ENCODE measurements at regions of chr5 and their contacts with region 1.

Region 1: GRCh38 chr5:142699184-142699720 is 13.4 kb upstream of the FGF1 start:
- DNase-seq: peak; percentile 86
- H3K4me3 Mint-ChIP-seq: no peak overlapping the region
- H3K27ac Mint-ChIP-seq: no peak overlapping the region
- H3K4me1 Mint-ChIP-seq: no peaks in the 10 kb centered on the region
- H3K27me3 Mint-ChIP-seq: peaks cover 22% of the 10 kb centered on the region

Region 2: GRCh38 chr5:142587354-142587965 is 111.8 kb before region 1 on chr5:
- CTCF ChIA-PET with region 1: interaction called, 25 read pairs
- DNase-seq: peak; percentile 35
- H3K4me3 Mint-ChIP-seq: no peak overlapping the region
- H3K27ac Mint-ChIP-seq: no peak overlapping the region
- H3K4me1 Mint-ChIP-seq: peaks cover 3% of the 10 kb centered on the region
- H3K27me3 Mint-ChIP-seq: peaks cover 24% of the 10 kb centered on the region

Region 3: DNA sequence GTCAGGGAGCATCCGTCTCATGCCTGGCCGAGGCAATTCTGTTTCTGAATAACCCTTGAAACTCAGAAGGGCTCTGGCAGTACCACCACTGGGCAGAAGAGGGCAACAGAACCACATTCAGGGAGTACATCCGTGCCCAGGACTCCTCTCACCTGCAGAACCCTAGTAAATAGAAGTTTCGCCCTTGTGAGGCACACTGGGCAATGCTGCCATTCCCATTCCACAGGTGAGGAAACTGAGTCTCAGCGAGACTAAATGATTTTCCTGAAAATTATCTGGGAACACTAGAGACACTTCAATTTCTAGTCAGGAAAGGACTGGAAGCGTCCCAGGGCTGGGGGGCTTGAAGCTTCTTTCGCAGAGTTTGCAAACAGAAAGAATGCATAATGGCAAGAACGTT is 88.1 kb before region 1 on chr5:
- CTCF ChIA-PET with region 1: interaction called, 43 read pairs
- DNase-seq: peak; percentile 80
- H3K4me3 Mint-ChIP-seq: no peak overlapping the region
- H3K27ac Mint-ChIP-seq: no peak overlapping the region
- H3K4me1 Mint-ChIP-seq: no peaks in the 10 kb centered on the region
- H3K27me3 Mint-ChIP-seq: peaks cover 16% of the 10 kb centered on the region

Region 4: DNA sequence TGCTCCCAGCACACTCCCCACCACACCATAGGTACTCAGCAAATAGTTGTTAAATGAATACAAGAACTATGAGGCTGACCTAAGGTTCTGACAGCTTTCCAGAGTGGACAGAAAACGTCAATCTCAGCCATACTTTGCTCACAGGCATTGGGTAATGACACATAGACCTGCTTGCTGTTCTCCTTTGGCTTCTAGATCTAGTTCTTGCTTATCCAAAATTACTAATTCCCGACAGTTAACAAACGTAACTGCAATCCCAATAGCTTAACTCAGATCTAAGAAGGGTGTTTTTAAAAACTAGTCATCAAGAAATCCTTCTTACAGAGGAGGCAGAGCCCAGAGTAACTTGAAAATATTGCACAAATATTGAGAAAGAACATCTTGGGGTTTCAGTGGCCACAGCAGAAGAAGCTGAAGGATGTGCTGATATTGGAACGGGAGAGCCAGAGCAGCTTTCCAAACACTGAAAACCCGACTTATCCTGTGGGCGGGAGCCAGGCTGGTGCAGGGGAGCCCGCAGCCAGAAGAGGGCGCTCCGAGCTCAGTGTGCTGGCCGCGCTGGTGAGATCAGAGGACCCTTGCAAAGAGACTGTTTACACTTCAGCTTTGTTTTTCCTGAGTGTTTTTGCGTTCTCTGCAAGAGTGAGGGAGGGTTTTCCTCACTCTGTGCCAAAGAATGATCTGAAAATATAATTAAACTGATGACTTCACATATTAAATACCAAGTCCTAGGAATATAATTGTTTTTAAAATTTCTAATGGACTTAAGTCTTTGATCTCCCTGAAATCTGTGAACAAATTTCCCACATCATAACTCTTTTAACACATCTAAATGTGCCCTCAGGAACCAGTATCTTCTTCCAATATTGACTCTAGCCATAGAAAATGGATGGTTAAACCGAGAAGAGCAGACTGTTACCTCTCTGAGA is 43.6 kb before region 1 on chr5:
- CTCF ChIA-PET with region 1: interaction called, 61 read pairs
- DNase-seq: peak; percentile 76
- H3K4me3 Mint-ChIP-seq: no peak overlapping the region
- H3K27ac Mint-ChIP-seq: no peak overlapping the region
- H3K4me1 Mint-ChIP-seq: no peaks in the 10 kb centered on the region
- H3K27me3 Mint-ChIP-seq: peaks cover 34% of the 10 kb centered on the region

Region 5: DNA sequence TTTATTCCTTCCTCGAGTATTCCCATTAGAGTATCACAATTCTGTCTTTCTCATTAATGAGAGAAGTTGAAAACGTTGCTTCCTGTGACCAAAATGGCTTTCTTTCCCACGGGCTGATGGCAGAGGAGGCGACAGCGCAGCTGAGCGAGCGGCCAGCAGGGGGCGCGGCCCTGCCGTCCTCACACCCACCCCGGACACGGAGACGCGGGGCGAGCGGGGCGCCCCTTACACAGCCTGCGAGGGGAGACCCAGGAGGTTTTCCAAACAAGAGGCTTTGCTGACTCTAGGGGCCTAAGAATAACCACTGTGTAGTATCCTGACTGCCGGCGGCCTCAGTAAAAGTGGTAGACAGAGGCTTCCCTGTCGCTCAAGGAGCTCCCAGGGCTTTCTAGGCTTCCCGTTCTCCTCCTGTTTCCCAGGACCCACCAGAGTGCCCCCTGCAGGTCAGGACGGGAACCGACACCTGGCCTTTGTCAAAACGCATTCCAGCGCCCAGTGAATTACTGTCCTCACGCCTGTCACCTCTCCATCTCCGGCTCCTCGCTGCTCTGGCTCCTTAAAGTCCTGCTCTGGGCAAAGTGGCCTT is 14.0 kb after region 1 on chr5:
- CTCF ChIA-PET with region 1: interaction called, 12 read pairs
- DNase-seq: peak; percentile 87
- H3K4me3 Mint-ChIP-seq: peak overlapping the region; percentile 68
- H3K27ac Mint-ChIP-seq: no peak overlapping the region
- H3K4me1 Mint-ChIP-seq: peaks cover 6% of the 10 kb centered on the region
- H3K27me3 Mint-ChIP-seq: peaks cover 32% of the 10 kb centered on the region

Region 6: DNA sequence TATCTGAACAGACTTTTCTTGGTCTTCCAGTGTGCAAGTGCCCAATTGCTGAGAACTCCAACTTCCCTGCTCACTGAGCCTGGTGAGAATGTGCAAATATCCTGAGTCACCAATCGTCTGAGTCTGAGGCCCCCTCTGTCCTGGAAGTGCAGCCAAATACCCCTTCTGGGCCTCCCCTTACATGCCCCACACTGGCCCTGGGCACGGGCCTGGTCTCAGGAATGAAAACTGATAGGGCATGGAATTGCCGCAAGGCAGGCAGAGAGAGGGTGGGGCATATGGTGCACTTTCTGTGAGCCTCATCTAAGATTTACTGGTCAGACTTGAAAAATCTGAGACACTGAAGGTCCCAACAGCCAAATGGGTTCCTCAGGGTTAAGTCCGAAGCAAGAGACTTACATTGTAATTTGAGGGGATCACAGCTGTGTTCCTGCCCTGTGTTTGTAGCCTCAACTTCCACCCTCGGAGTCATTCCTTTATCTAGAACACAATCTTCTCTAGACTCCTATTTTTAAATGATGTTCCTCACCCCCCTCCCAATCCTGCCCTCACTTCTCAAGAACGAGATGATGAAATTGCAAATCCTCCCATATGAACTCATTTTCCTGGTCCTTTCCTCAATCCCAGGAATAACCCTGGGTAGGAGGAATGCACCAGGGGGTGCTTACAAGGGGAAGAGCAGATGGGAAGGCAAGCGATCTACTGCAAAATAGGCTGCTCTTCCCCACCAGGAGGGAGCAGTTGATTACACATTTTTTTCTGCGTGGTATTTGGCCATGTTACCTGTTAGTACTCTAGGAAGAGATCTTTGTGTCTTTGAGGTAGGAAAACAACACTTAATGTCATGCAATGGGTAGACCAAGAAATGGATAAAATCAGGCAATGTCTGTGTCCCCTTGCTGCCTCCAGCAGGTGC is 36.3 kb after region 1 on chr5:
- CTCF ChIA-PET with region 1: no interaction called
- DNase-seq: no peak
- H3K4me3 Mint-ChIP-seq: no peak overlapping the region
- H3K27ac Mint-ChIP-seq: no peak overlapping the region
- H3K4me1 Mint-ChIP-seq: peaks cover 2% of the 10 kb centered on the region
- H3K27me3 Mint-ChIP-seq: peaks cover 21% of the 10 kb centered on the region

Region 7: DNA sequence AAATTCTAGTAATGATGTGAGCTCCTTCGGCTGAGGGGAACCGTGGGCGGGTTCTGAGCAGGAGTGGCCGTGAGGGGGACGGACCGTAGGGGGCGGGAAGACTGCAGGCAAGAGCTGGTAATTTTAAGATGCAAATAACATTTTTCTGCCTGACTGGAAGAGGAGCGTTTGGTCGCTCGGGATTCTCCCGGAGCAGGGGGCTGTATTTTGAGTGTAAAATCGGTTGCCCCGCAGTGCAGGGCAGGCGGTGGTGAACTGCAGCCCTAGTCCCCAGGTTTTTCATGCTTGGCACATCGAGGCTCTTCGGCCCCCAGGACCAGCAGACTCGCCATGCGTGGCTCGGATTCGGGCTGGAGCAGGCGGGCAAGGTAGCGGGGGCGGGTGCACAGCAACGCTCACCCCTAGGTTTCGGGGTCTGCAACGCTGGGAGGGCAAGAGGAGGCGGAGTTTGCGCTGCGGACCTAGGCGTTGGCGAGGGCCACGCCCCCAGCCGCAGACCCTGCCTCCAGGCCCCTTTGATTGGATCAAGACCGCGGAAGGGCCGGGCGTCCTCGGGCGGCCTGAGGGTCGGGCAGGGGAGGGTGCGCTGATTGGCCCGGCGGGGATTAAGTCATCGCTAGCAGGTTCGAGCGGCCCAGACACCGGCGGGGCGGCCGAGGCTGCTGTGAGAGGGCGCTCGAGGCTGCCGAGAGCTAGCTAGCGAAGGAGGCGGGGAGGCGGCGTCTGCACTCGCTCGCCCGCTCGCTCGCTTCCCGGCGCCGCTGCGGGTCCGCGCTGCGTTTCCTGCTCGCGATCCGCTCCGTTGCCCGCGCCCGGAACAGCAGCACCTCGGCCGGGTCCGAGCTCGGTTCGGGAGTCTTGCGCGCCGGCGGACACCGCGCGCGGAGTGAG is 70.7 kb after region 1 on chr5 and contains the start of gene ARHGAP26:
- CTCF ChIA-PET with region 1: no interaction called
- DNase-seq: peak; percentile 96
- H3K4me3 Mint-ChIP-seq: peak within 1 kb of the TSS; percentile 93
- H3K27ac Mint-ChIP-seq: peak within 1 kb of the TSS; percentile 88
- H3K4me1 Mint-ChIP-seq: peaks cover 34% of the 10 kb centered on the region
- H3K27me3 Mint-ChIP-seq: no peaks in the 10 kb centered on the region

Measured in activated naive CD4-positive, alpha-beta T cell treated with anti-CD3 and anti-CD28 coated beads, Interleukin-2, amount 10 ng/mL, durations not matched to agents 7 days and 5 days (primary cell).